ENCODE measurements at regions of chr2 and their contacts with region 1.

Region 1: DNA sequence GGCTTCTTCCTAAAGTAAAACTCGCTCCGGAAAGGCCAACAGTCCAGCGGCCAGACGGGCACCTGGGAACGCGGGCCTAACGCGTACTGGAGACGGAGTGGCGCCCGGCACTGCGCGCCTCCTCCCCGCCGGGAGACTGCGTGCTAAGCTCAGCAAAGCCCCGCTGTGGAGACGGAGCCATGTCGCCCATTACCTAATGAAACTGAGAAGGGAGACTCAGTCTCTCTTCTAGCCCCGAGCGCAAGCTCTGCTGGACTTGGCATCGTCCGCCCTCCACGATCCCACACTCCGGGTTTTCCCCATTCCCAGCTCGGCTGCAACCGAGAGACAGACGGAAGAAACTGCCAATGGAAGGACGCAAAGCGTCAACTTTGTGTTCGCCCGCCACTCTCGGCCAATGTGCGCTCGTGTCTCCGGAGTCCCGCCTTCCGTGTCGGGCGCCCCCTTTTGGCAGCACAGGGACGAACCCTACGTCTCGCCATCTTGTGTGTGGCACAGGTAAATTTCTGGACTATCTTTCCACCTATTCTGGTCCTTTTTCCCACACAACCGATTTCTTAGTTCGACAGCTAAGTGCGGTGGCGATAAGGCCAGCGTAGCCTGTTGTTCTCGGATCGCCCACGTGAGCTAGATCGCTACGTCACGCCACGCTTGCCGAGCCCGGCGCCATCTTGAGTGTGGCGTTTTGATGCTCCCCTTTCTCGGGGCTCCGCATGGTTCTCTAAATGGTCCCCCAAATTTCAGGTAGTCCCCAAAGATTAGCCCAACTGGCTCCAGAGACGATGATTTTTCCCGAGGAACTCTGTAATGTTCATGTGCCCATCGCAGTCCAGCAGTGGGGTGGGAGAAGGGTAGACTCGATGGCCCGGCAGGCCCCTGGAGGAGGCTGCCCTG is 1.3 kb upstream of the PTMA start:
- DNase-seq: peak; percentile 98
- H3K4me3 ChIP-seq: peak overlapping the region; percentile 87 to 99 (median 92)
- H3K4me3 Mint-ChIP-seq: peak overlapping the region; percentile 88 to 97
- H3K27ac ChIP-seq: peak overlapping the region; percentile 99 to 100
- H3K27ac Mint-ChIP-seq: peak overlapping the region; percentile 98 to 100 (median 100)
- H3K4me1 ChIP-seq: peaks cover 30 to 31% of the 10 kb centered on the region in 2 donors
- H3K4me1 Mint-ChIP-seq: peaks cover 25% of the 10 kb centered on the region
- H3K27me3 ChIP-seq: no peaks in the 10 kb centered on the region
- H3K27me3 Mint-ChIP-seq: no peaks in the 10 kb centered on the region
- CTCF ChIP-seq: peak; percentile 93

Region 2: GRCh38 chr2:231648587-231649174 is 58.3 kb before region 1 on chr2:
- intact Hi-C with region 1: no loop called
- DNase-seq: peak; percentile 48 to 75 (median 73)
- H3K4me3 ChIP-seq: no peak overlapping the region
- H3K4me3 Mint-ChIP-seq: no peak overlapping the region
- H3K27ac ChIP-seq: no peak overlapping the region
- H3K27ac Mint-ChIP-seq: no peak overlapping the region
- H3K4me1 ChIP-seq: peaks cover 10 to 11% of the 10 kb centered on the region in 2 donors
- H3K4me1 Mint-ChIP-seq: peaks cover 12% of the 10 kb centered on the region
- H3K27me3 ChIP-seq: no peaks in the 10 kb centered on the region
- H3K27me3 Mint-ChIP-seq: peaks cover 0 to 3% (median 2%) of the 10 kb centered on the region in 3 donors
- CTCF ChIP-seq: peak; percentile 78

Region 3: GRCh38 chr2:231662028-231662810 is 44.8 kb before region 1 on chr2:
- intact Hi-C with region 1: loop called (anchors 1 kb)
- DNase-seq: peak; percentile 97 to 99 (median 98)
- H3K4me3 ChIP-seq: peak overlapping the region; percentile 30 to 71 (median 34)
- H3K4me3 Mint-ChIP-seq: peak overlapping the region; percentile 65 to 80
- H3K27ac ChIP-seq: peak overlapping the region; percentile 86 to 93
- H3K27ac Mint-ChIP-seq: peak overlapping the region; percentile 84 to 94 (median 91)
- H3K4me1 ChIP-seq: peaks cover 39 to 40% of the 10 kb centered on the region in 2 donors
- H3K4me1 Mint-ChIP-seq: peaks cover 30% of the 10 kb centered on the region
- H3K27me3 ChIP-seq: no peaks in the 10 kb centered on the region
- H3K27me3 Mint-ChIP-seq: peaks cover 0 to 6% (median 1%) of the 10 kb centered on the region in 3 donors
- CTCF ChIP-seq: no peak

Region 4: DNA sequence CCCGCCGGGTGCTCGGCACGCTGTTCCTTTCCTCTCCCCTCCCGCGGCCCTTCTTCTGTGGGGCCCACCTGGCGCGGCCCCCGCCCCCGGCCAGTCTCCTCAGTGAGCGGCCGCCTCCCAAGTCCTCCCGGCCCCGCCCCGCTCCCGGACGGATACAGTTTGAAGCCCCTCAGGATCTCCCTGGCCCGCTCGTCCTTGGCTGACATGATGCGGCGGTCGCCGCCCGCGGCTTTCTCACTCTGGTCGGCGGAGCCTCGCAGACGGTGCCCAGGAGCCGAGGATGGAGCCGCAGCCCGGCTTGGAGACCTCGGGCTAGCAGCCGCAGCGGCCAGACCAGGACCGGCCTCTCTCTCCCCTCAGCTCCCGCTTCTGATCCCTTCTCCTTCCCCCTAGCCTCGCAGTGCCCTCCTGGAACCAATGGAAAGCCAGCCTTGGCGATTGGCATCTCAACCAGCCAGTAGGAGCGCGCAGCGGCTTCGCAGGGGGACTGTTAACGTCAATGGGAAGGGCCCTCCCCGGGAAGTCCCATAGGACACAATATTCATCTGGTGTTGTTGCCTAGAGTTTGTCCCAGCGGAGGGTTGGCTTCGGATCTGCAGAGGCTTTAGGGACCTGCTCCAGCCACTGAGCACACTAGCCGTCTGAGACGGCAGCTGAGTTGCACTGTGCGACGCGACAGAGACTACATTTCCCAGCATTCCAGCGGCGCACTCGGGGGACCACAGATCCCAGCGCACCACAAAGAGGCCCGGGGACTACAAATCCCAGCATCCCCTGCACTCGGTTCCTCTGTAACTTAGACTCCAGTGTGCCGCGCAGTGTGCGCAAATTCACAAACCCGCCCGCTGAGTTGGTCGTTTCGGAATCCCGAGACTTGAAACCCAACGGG is 74.2 kb after region 1 on chr2 and contains the start of gene PDE6D:
- intact Hi-C with region 1: loop called (anchors 5 to 10 kb)
- DNase-seq: peak; percentile 95 to 96 (median 95)
- H3K4me3 ChIP-seq: peak within 1 kb of the TSS; percentile 81 to 97 (median 94)
- H3K4me3 Mint-ChIP-seq: peak within 1 kb of the TSS; percentile 97 to 98
- H3K27ac ChIP-seq: peak within 1 kb of the TSS; percentile 33 to 86
- H3K27ac Mint-ChIP-seq: peak within 1 kb of the TSS; percentile 93 to 98 (median 97)
- H3K4me1 ChIP-seq: peaks cover 24 to 37% of the 10 kb centered on the region in 2 donors
- H3K4me1 Mint-ChIP-seq: peaks cover 37% of the 10 kb centered on the region
- H3K27me3 ChIP-seq: peaks cover 0 to 9% of the 10 kb centered on the region in 2 donors
- H3K27me3 Mint-ChIP-seq: peaks cover 4 to 13% (median 7%) of the 10 kb centered on the region in 3 donors
- CTCF ChIP-seq: no peak
- polyA plus RNA-seq, gene PDE6D: 28.4 to 54.6 (median 50.5) TPM

Region 5: GRCh38 chr2:232300894-232301387 is 594.0 kb after region 1 on chr2:
- intact Hi-C with region 1: no loop called
- DNase-seq: peak in 2 of 3 donors; percentile 23 to 29
- H3K4me3 ChIP-seq: no peak overlapping the region
- H3K4me3 Mint-ChIP-seq: no peak overlapping the region
- H3K27ac ChIP-seq: peak overlapping the region in 1 of 2 donors; percentile 24
- H3K27ac Mint-ChIP-seq: peak overlapping the region in 4 of 7 donors; percentile 12 to 82 (median 32)
- H3K4me1 ChIP-seq: peaks cover 0 to 4% of the 10 kb centered on the region in 2 donors
- H3K4me1 Mint-ChIP-seq: peaks cover 13% of the 10 kb centered on the region
- H3K27me3 ChIP-seq: no peaks in the 10 kb centered on the region
- H3K27me3 Mint-ChIP-seq: peaks cover 0 to 2% (median 0%) of the 10 kb centered on the region in 3 donors
- CTCF ChIP-seq: no peak

Region 6: DNA sequence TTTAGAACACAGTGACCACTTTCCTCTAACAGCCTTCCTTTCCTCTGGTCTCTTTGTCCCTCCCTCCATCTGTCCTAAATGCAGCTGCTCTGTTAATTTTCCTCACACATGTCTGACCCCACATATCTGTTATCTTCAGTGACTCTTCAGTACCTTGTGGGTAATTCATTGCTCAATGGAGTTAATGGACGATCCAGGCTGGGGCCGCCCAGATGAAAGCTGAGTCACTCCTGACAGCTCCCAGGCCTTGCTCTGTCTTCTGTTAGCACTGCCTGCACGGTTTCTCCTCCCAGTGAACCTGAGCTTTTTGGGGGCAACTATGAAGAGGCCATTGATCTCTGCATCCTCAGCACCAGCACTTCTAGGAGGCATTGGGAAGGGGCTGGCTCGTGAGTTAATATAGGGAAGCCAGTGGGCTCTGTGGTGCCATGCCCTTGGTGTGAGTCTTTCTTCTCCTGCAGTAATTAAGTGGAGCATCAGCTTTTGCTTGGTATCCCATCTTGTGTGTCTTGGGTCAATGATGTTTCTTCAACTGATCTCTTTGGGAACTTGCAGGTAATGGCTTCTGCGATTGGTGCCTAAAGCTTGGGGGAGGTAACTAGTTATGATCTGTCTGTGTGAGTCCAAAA is 1230.4 kb after region 1 on chr2:
- intact Hi-C with region 1: no loop called
- DNase-seq: no peak
- H3K4me3 ChIP-seq: no peak overlapping the region
- H3K4me3 Mint-ChIP-seq: no peak overlapping the region
- H3K27ac ChIP-seq: no peak overlapping the region
- H3K27ac Mint-ChIP-seq: no peak overlapping the region
- H3K4me1 ChIP-seq: no peaks in the 10 kb centered on the region
- H3K4me1 Mint-ChIP-seq: no peaks in the 10 kb centered on the region
- H3K27me3 ChIP-seq: peaks cover 2 to 4% of the 10 kb centered on the region in 2 donors
- H3K27me3 Mint-ChIP-seq: peaks cover 15 to 39% (median 33%) of the 10 kb centered on the region in 3 donors
- CTCF ChIP-seq: no peak

Measured in CD14-positive monocyte (primary cell).